Naive thymus-derived CD4-positive, alpha-beta T cell (primary cell): ENCODE measurements at regions of chr11 and their contacts with region 1.

Region 1: GRCh38 chr11:18721561-18722292 is 4.3 kb downstream of the IGSF22 start:
- DNase-seq: peak; percentile 15 to 51 (median 37)
- ATAC-seq: peak; percentile 61
- H3K4me3 ChIP-seq: peak overlapping the region; percentile 72
- H3K4me3 Mint-ChIP-seq: peak overlapping the region; percentile 82 to 97 (median 92)
- H3K27ac ChIP-seq: peak overlapping the region; percentile 46
- H3K27ac Mint-ChIP-seq: peak overlapping the region in 6 of 9 donors; percentile 39 to 89 (median 76)
- H3K4me1 ChIP-seq: peaks cover 0 to 5% of the 10 kb centered on the region in 2 donors
- H3K4me1 Mint-ChIP-seq: peaks cover 8 to 15% (median 9%) of the 10 kb centered on the region in 7 donors
- H3K27me3 ChIP-seq: no peaks in the 10 kb centered on the region
- H3K27me3 Mint-ChIP-seq: peaks cover 0 to 34% (median 0%) of the 10 kb centered on the region in 5 donors

Region 2: GRCh38 chr11:18540207-18541009 is 181.3 kb before region 1 on chr11:
- CTCF ChIA-PET with region 1: interaction called, 15 read pairs
- POLR2A ChIA-PET with region 1: no interaction called
- intact Hi-C with region 1: no loop called
- DNase-seq: peak in 6 of 9 donors; percentile 30 to 60 (median 44)
- ATAC-seq: peak; percentile 73
- H3K4me3 ChIP-seq: no peak overlapping the region
- H3K4me3 Mint-ChIP-seq: no peak overlapping the region
- H3K27ac ChIP-seq: no peak overlapping the region
- H3K27ac Mint-ChIP-seq: peak overlapping the region in 2 of 9 donors; percentile 2 to 13
- H3K4me1 ChIP-seq: no peaks in the 10 kb centered on the region
- H3K4me1 Mint-ChIP-seq: peaks cover 0 to 8% (median 0%) of the 10 kb centered on the region in 7 donors
- H3K27me3 ChIP-seq: no peaks in the 10 kb centered on the region
- H3K27me3 Mint-ChIP-seq: no peaks in the 10 kb centered on the region

Region 3: DNA sequence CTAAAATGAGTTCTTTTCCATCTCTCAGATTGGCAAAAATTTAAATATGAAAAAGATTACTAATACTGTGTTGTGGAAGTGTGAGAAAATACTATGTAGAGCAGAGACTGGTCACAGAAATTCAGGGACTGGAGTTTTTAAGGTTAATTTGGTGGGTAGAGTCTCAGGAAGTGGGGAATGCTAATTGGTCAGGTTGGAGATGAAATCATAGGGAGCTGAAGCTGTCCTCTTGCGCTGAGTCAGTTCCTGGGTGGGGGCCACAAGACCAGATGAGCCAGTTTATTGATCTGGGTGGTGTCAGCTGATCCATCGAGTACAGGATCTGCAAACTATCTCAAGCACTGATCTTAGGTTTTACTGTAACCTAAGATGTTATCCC is 52.5 kb before region 1 on chr11:
- CTCF ChIA-PET with region 1: no interaction called
- POLR2A ChIA-PET with region 1: interaction called, 4 read pairs
- intact Hi-C with region 1: loop called in 1 of 2 experiments (anchors 1 kb)
- DNase-seq: no peak
- ATAC-seq: no peak
- H3K4me3 ChIP-seq: no peak overlapping the region
- H3K4me3 Mint-ChIP-seq: peak overlapping the region in 2 of 10 donors; percentile 1 to 28
- H3K27ac ChIP-seq: no peak overlapping the region
- H3K27ac Mint-ChIP-seq: peak overlapping the region in 8 of 9 donors; percentile 6 to 89 (median 54)
- H3K4me1 ChIP-seq: peaks cover 20 to 26% of the 10 kb centered on the region in 2 donors
- H3K4me1 Mint-ChIP-seq: peaks cover 34 to 74% (median 54%) of the 10 kb centered on the region in 7 donors
- H3K27me3 ChIP-seq: no peaks in the 10 kb centered on the region
- H3K27me3 Mint-ChIP-seq: peaks cover 0 to 17% (median 0%) of the 10 kb centered on the region in 5 donors

Region 4: DNA sequence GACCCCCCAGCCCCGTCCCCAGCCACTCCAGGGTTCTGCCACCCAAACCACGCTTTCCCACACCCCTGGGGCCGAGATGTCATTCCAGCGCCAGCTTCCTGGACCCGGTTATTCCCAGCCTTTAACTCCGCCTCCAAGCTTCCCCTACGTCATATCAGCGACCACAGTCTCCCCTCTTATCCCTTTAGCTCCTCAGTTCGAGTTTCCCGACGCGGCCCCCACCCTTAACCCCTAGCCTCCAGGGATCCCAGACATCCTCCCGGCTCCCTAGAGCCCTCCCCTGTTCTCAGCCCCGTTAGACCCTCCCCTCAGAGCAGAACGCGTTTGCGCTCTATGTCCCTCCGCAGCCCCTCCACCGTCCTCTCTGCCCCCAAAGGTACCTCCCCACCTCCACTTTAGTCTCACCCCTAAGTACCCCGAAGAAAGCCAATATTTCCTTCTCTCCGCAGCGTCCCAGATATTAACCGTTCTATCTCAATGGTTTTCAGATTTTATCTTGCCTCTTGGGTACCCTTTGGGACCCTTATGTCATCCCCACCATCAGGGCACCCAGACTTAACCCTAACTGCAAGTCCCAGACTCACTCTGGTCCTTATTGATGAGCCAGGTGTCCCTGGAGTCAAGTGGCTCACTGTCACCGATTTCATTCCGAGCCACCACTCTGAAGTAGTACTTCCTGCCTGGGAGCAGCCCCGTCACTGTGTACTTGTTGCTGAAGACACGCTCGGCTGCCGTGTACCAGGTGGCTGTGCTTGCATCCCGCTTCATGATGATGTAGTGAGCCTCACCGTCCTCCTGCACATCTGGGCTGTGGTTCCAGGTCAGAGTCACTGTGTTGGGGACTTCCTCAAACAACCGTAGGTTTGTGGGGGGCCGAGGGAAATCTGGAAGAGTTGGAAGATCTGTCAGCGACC is 15.1 kb before region 1 on chr11:
- CTCF ChIA-PET with region 1: interaction called, 6 read pairs
- POLR2A ChIA-PET with region 1: interaction called, 10 read pairs
- intact Hi-C with region 1: loop called in 1 of 2 experiments (anchors 1 kb)
- DNase-seq: peak in 8 of 9 donors; percentile 34 to 73 (median 64)
- ATAC-seq: peak; percentile 83
- H3K4me3 ChIP-seq: peak overlapping the region; percentile 88
- H3K4me3 Mint-ChIP-seq: peak overlapping the region; percentile 90 to 98 (median 93)
- H3K27ac ChIP-seq: peak overlapping the region; percentile 68
- H3K27ac Mint-ChIP-seq: peak overlapping the region; percentile 81 to 98 (median 90)
- H3K4me1 ChIP-seq: peaks cover 9 to 10% of the 10 kb centered on the region in 2 donors
- H3K4me1 Mint-ChIP-seq: peaks cover 15 to 29% (median 25%) of the 10 kb centered on the region in 7 donors
- H3K27me3 ChIP-seq: no peaks in the 10 kb centered on the region
- H3K27me3 Mint-ChIP-seq: peaks cover 0 to 55% (median 0%) of the 10 kb centered on the region in 5 donors